ENCODE measurements at regions of chr17 and their contacts with region 1.

Region 1: DNA sequence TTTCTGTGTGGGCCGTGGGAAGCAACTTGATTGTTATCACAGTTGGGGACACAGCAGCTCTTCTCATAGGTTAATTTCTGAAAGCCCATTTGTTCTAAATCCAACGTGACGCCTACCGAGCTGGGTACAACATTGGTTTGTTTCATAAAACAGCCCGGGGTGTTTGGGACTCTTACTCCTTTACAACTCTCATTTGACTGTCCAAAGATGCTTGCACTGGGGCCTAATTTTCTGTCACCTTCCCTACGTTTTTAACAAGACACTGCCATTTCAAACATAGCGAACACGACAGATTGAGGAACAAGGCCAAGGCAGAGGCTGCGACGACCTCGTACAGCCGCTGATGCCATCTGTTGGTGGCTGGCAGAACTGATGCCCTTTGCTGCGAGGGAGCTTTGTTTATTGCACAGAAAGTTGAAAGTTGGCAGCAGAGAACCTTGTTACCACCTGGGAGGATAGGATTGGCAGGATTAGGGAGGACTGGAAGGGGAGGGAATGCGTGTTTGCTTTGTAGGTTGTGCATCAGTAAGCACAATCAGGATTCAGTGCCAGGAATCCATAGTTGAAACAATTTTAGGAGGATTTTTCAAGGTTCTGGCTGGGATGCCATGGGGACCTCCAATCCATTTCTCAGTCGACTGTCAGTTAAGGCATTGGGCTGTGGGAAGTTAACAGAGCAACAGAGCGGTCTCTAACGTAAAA is 98.3 kb downstream of the PITPNC1 start:
- DNase-seq: peak; percentile 74 to 94 (median 83)
- ATAC-seq: peak; percentile 81 to 90 (median 82)
- H3K4me3 ChIP-seq: peak overlapping the region in 1 of 2 donors; percentile 34
- H3K4me3 Mint-ChIP-seq: peak overlapping the region; percentile 61 to 65 (median 61)
- H3K27ac ChIP-seq: peak overlapping the region; percentile 91
- H3K27ac Mint-ChIP-seq: peak overlapping the region; percentile 89 to 94
- H3K4me1 ChIP-seq: peaks cover 31 to 67% of the 10 kb centered on the region in 2 experiments
- H3K4me1 Mint-ChIP-seq: peaks cover 70 to 75% (median 74%) of the 10 kb centered on the region in 3 donors
- H3K27me3 ChIP-seq: no peaks in the 10 kb centered on the region
- H3K27me3 Mint-ChIP-seq: no peaks in the 10 kb centered on the region

Region 2: DNA sequence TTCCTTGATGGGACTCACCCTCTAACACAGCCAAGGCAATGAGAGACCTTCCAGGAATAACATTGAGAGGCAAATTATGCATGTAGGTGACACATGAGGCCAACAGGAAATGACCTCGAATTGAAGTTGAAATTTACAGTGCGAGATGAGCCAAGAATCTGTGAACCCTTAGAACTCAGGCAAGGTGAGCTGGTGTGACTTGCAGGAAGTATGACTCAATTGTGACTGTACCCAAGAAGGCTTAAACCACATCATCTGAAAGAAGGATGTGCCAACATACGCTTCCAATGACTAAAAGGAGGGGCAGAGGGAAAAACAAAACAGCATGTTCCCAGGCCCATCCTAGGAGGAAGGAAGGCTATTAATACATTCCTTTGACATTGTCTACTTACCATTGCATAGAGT is 53.5 kb before region 1 on chr17:
- CTCF ChIA-PET with region 1: interaction called, 3 to 11 read pairs
- POLR2A ChIA-PET with region 1: interaction called in 1 of 2 experiments, 3 read pairs
- DNase-seq: peak in 31 of 35 experiments; percentile 32 to 91 (median 60)
- ATAC-seq: peak; percentile 96 to 98 (median 96)
- H3K4me3 ChIP-seq: no peak overlapping the region
- H3K4me3 Mint-ChIP-seq: peak overlapping the region; percentile 45 to 67 (median 52)
- H3K27ac ChIP-seq: peak overlapping the region; percentile 93
- H3K27ac Mint-ChIP-seq: peak overlapping the region; percentile 95 to 96
- H3K4me1 ChIP-seq: peaks cover 52 to 80% of the 10 kb centered on the region in 2 experiments
- H3K4me1 Mint-ChIP-seq: peaks cover 89 to 94% (median 92%) of the 10 kb centered on the region in 3 donors
- H3K27me3 ChIP-seq: no peaks in the 10 kb centered on the region
- H3K27me3 Mint-ChIP-seq: no peaks in the 10 kb centered on the region

Region 3: DNA sequence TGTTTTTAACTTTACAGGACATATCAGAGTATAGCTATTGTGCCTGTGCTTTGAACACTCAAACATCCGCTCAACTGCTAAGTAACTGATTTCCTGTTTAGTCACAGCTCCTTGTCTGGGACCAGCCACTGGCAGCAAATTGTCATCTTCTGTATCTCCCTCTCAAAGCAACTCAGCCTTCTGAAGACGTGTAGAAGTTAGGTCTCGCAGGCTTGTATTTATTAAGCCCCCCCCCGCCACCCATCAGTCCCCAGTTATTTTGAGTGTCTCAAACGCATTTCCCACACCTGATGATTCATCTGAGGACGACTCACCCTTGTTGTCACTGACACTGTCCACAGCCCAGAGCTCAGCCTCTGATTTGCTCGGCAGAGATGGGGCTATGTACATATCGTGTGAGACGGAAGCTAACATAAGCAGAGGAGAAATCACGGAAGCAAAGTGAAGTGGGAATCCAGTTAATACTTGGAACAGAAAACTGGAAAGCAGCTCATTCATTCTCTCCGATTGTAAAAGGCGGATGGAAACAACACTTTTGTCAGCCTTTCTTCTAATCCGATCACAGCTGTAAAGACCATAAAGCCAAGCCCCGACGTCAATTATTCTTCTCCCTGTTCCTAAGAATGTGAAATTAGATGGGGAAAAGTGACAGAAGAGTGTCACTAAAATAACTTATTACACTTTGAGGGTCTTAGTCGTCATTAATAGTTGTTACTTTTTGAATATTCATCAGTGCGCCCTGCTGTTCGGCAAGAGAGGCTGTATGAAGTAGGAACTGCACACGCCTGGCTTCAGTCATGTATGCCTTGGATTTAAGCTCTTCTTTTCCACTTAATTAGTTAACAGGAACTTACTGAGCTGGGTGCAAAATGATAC is 34.1 kb before region 1 on chr17:
- CTCF ChIA-PET with region 1: interaction called, 4 to 43 read pairs
- POLR2A ChIA-PET with region 1: interaction called, 7 to 11 read pairs
- DNase-seq: peak; percentile 48 to 90 (median 73)
- ATAC-seq: peak; percentile 91 to 94 (median 93)
- H3K4me3 ChIP-seq: peak overlapping the region; percentile 6 to 46
- H3K4me3 Mint-ChIP-seq: peak overlapping the region; percentile 65 to 81 (median 75)
- H3K27ac ChIP-seq: peak overlapping the region; percentile 98
- H3K27ac Mint-ChIP-seq: peak overlapping the region; percentile 96 to 97
- H3K4me1 ChIP-seq: peaks cover 60 to 88% of the 10 kb centered on the region in 2 experiments
- H3K4me1 Mint-ChIP-seq: peaks cover 93 to 97% (median 93%) of the 10 kb centered on the region in 3 donors
- H3K27me3 ChIP-seq: no peaks in the 10 kb centered on the region
- H3K27me3 Mint-ChIP-seq: no peaks in the 10 kb centered on the region

Region 4: GRCh38 chr17:67520252-67520906 is 45.0 kb after region 1 on chr17:
- CTCF ChIA-PET with region 1: no interaction called
- POLR2A ChIA-PET with region 1: interaction called in 1 of 2 experiments, 10 read pairs
- DNase-seq: peak in 2 of 35 experiments; percentile 14 to 21
- ATAC-seq: peak in 2 of 4 experiments; percentile 23 to 46
- H3K4me3 ChIP-seq: no peak overlapping the region
- H3K4me3 Mint-ChIP-seq: peak overlapping the region in 2 of 3 donors; percentile 4 to 56
- H3K27ac ChIP-seq: peak overlapping the region; percentile 8
- H3K27ac Mint-ChIP-seq: peak overlapping the region; percentile 76 to 89
- H3K4me1 ChIP-seq: peaks cover 9 to 13% of the 10 kb centered on the region in 2 experiments
- H3K4me1 Mint-ChIP-seq: peaks cover 63 to 73% (median 72%) of the 10 kb centered on the region in 3 donors
- H3K27me3 ChIP-seq: no peaks in the 10 kb centered on the region
- H3K27me3 Mint-ChIP-seq: no peaks in the 10 kb centered on the region

Region 5: DNA sequence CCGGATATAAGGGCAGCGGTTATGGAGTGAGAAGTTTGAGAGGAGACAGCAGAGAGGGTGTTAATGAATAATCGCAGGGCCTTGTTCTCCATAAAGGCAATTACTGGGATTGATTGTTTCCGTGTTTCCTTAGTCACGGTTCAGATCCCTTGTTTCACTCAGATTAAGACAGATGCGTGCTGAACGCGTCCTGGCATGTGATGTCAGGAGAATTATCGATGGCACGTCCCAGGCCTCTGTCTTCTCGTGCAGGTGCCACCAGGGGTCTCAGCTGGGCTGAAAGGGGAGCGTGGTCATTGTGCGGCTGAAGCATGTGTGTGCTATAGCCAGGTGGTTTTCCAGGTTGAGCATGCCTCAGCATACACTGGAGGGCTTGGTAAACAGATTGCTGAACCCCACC is 99.9 kb after region 1 on chr17:
- CTCF ChIA-PET with region 1: no interaction called
- POLR2A ChIA-PET with region 1: no interaction called
- DNase-seq: no peak
- ATAC-seq: no peak
- H3K4me3 ChIP-seq: no peak overlapping the region
- H3K4me3 Mint-ChIP-seq: no peak overlapping the region
- H3K27ac ChIP-seq: no peak overlapping the region
- H3K27ac Mint-ChIP-seq: no peak overlapping the region
- H3K4me1 ChIP-seq: no peaks in the 10 kb centered on the region
- H3K4me1 Mint-ChIP-seq: peaks cover 22 to 42% (median 32%) of the 10 kb centered on the region in 3 donors
- H3K27me3 ChIP-seq: no peaks in the 10 kb centered on the region
- H3K27me3 Mint-ChIP-seq: no peaks in the 10 kb centered on the region

Region 6: DNA sequence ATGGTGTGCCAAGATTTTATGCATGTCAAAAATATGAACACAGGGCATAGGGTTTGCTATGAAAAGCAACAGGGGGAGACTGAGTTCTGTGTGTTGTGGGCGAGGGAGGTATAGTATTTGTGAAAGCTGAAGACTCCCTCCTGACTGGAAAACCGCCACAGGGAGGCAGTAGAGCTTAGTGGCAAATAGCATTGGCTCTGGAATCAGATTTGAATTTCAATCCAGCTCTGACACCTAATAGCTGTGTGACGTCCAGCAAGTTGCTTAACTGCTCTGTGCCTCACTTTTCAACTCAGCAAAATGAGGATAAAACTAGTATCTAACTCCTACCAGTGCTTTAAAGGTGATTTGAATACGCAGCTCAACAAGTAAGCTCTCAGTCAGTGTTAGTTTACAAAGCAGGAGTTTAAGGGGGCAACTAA is 582.2 kb after region 1 on chr17:
- CTCF ChIA-PET with region 1: no interaction called
- POLR2A ChIA-PET with region 1: interaction called in 1 of 2 experiments, 12 read pairs
- DNase-seq: peak in 32 of 35 experiments; percentile 12 to 62 (median 37)
- ATAC-seq: peak; percentile 67 to 87 (median 78)
- H3K4me3 ChIP-seq: no peak overlapping the region
- H3K4me3 Mint-ChIP-seq: no peak overlapping the region
- H3K27ac ChIP-seq: no peak overlapping the region
- H3K27ac Mint-ChIP-seq: no peak overlapping the region
- H3K4me1 ChIP-seq: peaks cover 0 to 5% of the 10 kb centered on the region in 2 experiments
- H3K4me1 Mint-ChIP-seq: peaks cover 0 to 41% (median 4%) of the 10 kb centered on the region in 3 donors
- H3K27me3 ChIP-seq: peaks cover 0 to 3% of the 10 kb centered on the region in 2 experiments
- H3K27me3 Mint-ChIP-seq: no peaks in the 10 kb centered on the region